ENCODE measurements at regions of chr9 and their contacts with region 1.

Region 1: GRCh38 chr9:119026120-119026519 is 343.1 kb downstream of the BRINP1 start:
- DNase-seq: peak; percentile 9
- H3K4me3 ChIP-seq: no peak overlapping the region
- H3K27ac ChIP-seq: no peak overlapping the region
- H3K4me1 ChIP-seq: no peaks in the 10 kb centered on the region
- H3K27me3 ChIP-seq: no peaks in the 10 kb centered on the region
- CTCF ChIP-seq: no peak

Region 2: GRCh38 chr9:118918180-118918579 is 107.9 kb before region 1 on chr9:
- CTCF ChIA-PET with region 1: no interaction called
- dilution Hi-C with region 1: no loop called
- in situ Hi-C with region 1: no loop called
- intact Hi-C with region 1: no loop called
- DNase-seq: no peak
- H3K4me3 ChIP-seq: no peak overlapping the region
- H3K27ac ChIP-seq: no peak overlapping the region
- H3K4me1 ChIP-seq: no peaks in the 10 kb centered on the region
- H3K27me3 ChIP-seq: no peaks in the 10 kb centered on the region
- CTCF ChIP-seq: no peak

Region 3: DNA sequence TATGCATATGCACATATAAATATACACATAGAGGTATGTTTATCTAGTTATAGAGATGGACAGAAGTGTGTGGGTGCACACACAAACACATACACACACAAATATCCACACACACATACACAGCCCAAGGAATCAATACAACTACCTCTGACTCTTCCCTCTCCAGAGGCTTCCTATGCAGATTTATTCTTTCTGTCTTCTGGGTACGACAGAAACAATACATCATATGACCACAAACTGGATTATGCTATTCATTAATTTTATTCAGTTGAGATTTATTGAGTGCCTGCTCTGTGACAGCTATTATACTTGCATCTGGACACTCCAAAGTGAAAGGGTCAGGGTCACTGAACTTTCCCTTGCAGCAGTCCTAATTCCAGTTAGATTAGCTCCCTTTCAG is 187.4 kb after region 1 on chr9:
- CTCF ChIA-PET with region 1: interaction called, 12 read pairs
- dilution Hi-C with region 1: no loop called
- in situ Hi-C with region 1: no loop called
- intact Hi-C with region 1: no loop called
- DNase-seq: no peak
- H3K4me3 ChIP-seq: no peak overlapping the region
- H3K27ac ChIP-seq: no peak overlapping the region
- H3K4me1 ChIP-seq: no peaks in the 10 kb centered on the region
- H3K27me3 ChIP-seq: no peaks in the 10 kb centered on the region
- CTCF ChIP-seq: no peak

Region 4: DNA sequence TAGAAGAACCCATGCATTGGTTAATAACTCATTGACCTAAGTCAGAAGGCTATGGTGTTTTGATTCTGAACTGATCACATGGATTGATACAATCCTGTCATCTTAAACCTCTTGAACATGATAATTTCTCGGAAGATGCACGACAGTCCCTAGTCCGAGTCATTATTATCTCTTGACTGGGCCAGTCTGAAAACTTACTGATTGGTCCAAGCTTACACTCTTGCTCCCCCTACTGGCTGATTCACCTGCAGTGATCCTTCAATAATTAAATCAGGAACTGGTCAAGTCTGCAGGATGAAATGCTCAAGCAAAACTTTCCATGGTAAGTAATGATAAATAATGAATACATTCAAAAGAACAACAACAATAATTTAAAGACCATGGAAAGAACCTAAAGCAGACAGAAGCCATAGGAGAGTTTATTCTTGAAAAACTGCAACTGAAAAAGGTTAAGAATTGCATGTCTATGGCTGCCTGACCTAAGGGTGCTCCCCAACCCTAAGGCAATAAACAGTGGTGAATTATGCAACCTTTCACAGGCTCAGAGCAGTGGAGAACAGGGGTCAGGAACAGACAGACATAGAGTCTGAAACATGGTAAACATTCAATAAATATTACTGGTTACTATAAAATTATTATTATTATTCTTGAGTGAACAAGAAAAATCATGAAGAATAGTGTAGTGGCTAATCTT is 263.8 kb after region 1 on chr9:
- CTCF ChIA-PET with region 1: no interaction called
- dilution Hi-C with region 1: no loop called
- in situ Hi-C with region 1: no loop called
- intact Hi-C with region 1: no loop called
- DNase-seq: peak; percentile 50
- H3K4me3 ChIP-seq: no peak overlapping the region
- H3K27ac ChIP-seq: no peak overlapping the region
- H3K4me1 ChIP-seq: no peaks in the 10 kb centered on the region
- H3K27me3 ChIP-seq: no peaks in the 10 kb centered on the region
- CTCF ChIP-seq: peak; percentile 49 to 66